ENCODE measurements at regions of chr17 and their contacts with region 1.

Region 1: GRCh38 chr17:75679706-75680442 is 12.7 kb downstream of the SAP30BP start:
- DNase-seq: no peak
- H3K4me3 ChIP-seq: no peak overlapping the region
- H3K27ac ChIP-seq: peak overlapping the region; percentile 72
- H3K4me1 ChIP-seq: peaks cover 50% of the 10 kb centered on the region
- H3K27me3 ChIP-seq: no peaks in the 10 kb centered on the region
- CTCF ChIP-seq: peak; percentile 31 to 71 (median 71)

Region 2: GRCh38 chr17:75614006-75614405 is 65.9 kb before region 1 on chr17:
- dilution Hi-C with region 1: no loop called
- DNase-seq: no peak
- H3K4me3 ChIP-seq: no peak overlapping the region
- H3K27ac ChIP-seq: no peak overlapping the region
- H3K4me1 ChIP-seq: no peaks in the 10 kb centered on the region
- H3K27me3 ChIP-seq: peaks cover 5% of the 10 kb centered on the region
- CTCF ChIP-seq: peak in 1 of 3 experiments; percentile 17

Region 3: GRCh38 chr17:75720725-75721462 is 41.0 kb after region 1 on chr17 and contains the start of gene ITGB4:
- dilution Hi-C with region 1: loop called (anchors 10 kb)
- DNase-seq: no peak
- H3K4me3 ChIP-seq: peak within 1 kb of the TSS; percentile 93 to 100 (median 100)
- H3K27ac ChIP-seq: peak within 1 kb of the TSS; percentile 94
- H3K4me1 ChIP-seq: peaks cover 31% of the 10 kb centered on the region
- H3K27me3 ChIP-seq: no peaks in the 10 kb centered on the region
- CTCF ChIP-seq: peak in 1 of 3 experiments; percentile 32
- polyA plus RNA-seq, gene ITGB4: 761 to 1,084 TPM (median 1,039 TPM) in 3 replicates

Region 4: GRCh38 chr17:75740631-75741077 is 60.8 kb after region 1 on chr17:
- dilution Hi-C with region 1: no loop called
- DNase-seq: no peak
- H3K4me3 ChIP-seq: no peak overlapping the region
- H3K27ac ChIP-seq: no peak overlapping the region
- H3K4me1 ChIP-seq: no peaks in the 10 kb centered on the region
- H3K27me3 ChIP-seq: no peaks in the 10 kb centered on the region
- CTCF ChIP-seq: no peak

Measured in keratinocyte (primary cell).